ENCODE measurements at regions of chr3 and their contacts with region 1.

Region 1: DNA sequence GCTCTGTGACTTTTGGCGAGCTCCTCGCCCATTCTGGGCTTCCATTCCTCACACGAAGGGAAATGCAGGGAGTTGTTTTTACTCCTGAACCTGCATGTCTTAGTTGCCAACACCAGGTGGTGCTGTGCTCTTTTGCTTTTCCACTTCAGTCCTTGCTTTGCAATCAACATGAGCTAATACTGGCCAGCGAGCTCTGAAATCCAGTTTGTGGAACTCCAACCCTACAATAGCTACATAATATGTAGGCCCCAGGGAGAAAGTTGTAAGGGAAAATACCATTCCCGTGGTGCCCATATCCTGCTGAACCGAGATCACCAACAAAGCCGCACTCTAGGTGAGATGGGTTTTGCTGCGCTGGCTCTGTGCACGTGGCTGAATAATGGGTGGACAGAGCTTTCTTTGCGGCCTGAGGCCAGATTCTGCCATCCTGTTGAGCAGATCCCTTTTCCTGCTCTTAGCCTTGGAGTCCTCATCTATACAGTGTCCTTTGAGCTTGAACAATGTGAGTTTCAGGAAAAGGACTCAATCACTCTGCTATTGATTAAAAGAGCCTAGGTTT is 25.0 kb downstream of the LSM3 start:
- DNase-seq: peak; percentile 50
- ATAC-seq: peak; percentile 77
- H3K4me3 Mint-ChIP-seq: no peak overlapping the region
- H3K27ac Mint-ChIP-seq: no peak overlapping the region
- H3K4me1 Mint-ChIP-seq: no peaks in the 10 kb centered on the region
- H3K27me3 Mint-ChIP-seq: no peaks in the 10 kb centered on the region

Region 2: GRCh38 chr3:14178247-14179113 is 25.1 kb before region 1 on chr3 and contains the starts of genes LSM3 and XPC:
- CTCF ChIA-PET with region 1: interaction called, 11 read pairs
- DNase-seq: peak; percentile 97
- ATAC-seq: peak; percentile 92
- H3K4me3 Mint-ChIP-seq: peak within 1 kb of the TSS; percentile 81
- H3K27ac Mint-ChIP-seq: peak within 1 kb of the TSS; percentile 99
- H3K4me1 Mint-ChIP-seq: peaks cover 66% of the 10 kb centered on the region
- H3K27me3 Mint-ChIP-seq: no peaks in the 10 kb centered on the region
- total RNA-seq, gene LSM3: 16.5 to 18.9 TPM
- total RNA-seq, gene XPC: 36.0 to 39.5 TPM

Region 3: GRCh38 chr3:14188041-14188754 is 15.4 kb before region 1 on chr3:
- CTCF ChIA-PET with region 1: interaction called, 14 read pairs
- DNase-seq: no peak
- ATAC-seq: no peak
- H3K4me3 Mint-ChIP-seq: no peak overlapping the region
- H3K27ac Mint-ChIP-seq: no peak overlapping the region
- H3K4me1 Mint-ChIP-seq: peaks cover 29% of the 10 kb centered on the region
- H3K27me3 Mint-ChIP-seq: no peaks in the 10 kb centered on the region

Region 4: GRCh38 chr3:14214764-14215163 is 11.2 kb after region 1 on chr3:
- CTCF ChIA-PET with region 1: interaction called, 12 read pairs
- DNase-seq: no peak
- ATAC-seq: no peak
- H3K4me3 Mint-ChIP-seq: no peak overlapping the region
- H3K27ac Mint-ChIP-seq: no peak overlapping the region
- H3K4me1 Mint-ChIP-seq: no peaks in the 10 kb centered on the region
- H3K27me3 Mint-ChIP-seq: peaks cover under 1% of the 10 kb centered on the region

Region 5: GRCh38 chr3:14234251-14235002 is 30.8 kb after region 1 on chr3:
- CTCF ChIA-PET with region 1: interaction called, 11 read pairs
- DNase-seq: peak; percentile 31
- ATAC-seq: no peak
- H3K4me3 Mint-ChIP-seq: no peak overlapping the region
- H3K27ac Mint-ChIP-seq: no peak overlapping the region
- H3K4me1 Mint-ChIP-seq: peaks cover 7% of the 10 kb centered on the region
- H3K27me3 Mint-ChIP-seq: peaks cover 29% of the 10 kb centered on the region

Region 6: GRCh38 chr3:14413381-14414071 is 209.9 kb after region 1 on chr3:
- CTCF ChIA-PET with region 1: no interaction called
- DNase-seq: no peak
- ATAC-seq: no peak
- H3K4me3 Mint-ChIP-seq: no peak overlapping the region
- H3K27ac Mint-ChIP-seq: no peak overlapping the region
- H3K4me1 Mint-ChIP-seq: peaks cover 20% of the 10 kb centered on the region
- H3K27me3 Mint-ChIP-seq: no peaks in the 10 kb centered on the region

Region 7: DNA sequence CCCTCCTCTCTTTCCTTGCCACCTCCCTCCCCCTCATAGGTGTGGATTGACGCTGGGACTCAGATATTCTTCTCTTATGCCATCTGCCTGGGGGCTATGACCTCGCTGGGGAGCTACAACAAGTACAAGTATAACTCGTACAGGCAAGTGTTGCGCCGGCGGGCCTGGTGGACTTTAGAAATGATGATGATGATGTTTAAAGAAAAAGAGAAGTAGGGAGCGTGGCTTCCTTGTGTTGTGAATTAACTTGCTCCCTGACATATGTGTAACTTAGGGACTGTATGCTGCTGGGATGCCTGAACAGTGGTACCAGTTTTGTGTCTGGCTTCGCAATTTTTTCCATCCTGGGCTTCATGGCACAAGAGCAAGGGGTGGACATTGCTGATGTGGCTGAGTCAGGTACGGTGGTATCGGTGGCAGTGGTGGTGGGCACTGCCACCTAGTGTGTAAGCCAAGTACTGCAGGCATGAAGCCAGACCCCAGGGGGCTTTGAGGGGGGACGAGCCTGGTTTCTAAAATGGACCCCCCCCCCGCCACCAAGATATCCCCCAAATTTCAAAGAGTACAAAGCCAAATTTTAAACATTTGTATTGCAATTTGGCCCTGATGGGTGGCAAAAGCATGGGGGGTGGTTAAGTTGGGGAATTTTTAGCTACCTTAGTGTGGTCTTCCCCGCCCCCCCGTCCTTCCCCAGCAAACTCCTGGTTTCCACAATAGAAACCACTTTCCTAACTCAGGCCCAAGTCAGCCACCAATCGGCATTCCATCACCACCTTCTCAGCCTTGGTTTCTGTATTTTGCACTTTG is 264.4 kb after region 1 on chr3:
- CTCF ChIA-PET with region 1: interaction called, 26 read pairs
- DNase-seq: peak; percentile 44
- ATAC-seq: peak; percentile 58
- H3K4me3 Mint-ChIP-seq: no peak overlapping the region
- H3K27ac Mint-ChIP-seq: no peak overlapping the region
- H3K4me1 Mint-ChIP-seq: peaks cover 6% of the 10 kb centered on the region
- H3K27me3 Mint-ChIP-seq: no peaks in the 10 kb centered on the region

Region 8: DNA sequence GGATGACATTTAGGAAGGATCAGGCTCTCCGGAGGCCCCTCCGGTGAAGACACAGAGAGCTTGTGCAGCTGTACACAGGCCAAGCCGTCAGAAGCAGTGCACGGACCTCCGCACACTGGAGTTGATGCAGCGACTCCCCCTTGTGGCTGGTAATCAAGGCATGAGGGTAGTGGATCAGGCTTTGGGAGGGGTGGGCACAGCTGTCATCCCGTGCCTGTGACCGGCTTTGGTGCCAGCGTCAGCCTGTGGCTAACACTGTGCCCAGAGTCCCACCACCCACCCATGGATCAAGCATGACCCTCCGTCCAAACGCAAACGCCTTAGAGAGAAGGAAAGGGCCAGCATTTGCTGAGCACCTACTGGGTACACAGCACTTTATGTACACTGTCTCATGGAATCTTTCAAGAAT is 344.7 kb after region 1 on chr3:
- CTCF ChIA-PET with region 1: interaction called, 12 read pairs
- DNase-seq: peak; percentile 54
- ATAC-seq: peak; percentile 67
- H3K4me3 Mint-ChIP-seq: no peak overlapping the region
- H3K27ac Mint-ChIP-seq: no peak overlapping the region
- H3K4me1 Mint-ChIP-seq: no peaks in the 10 kb centered on the region
- H3K27me3 Mint-ChIP-seq: peaks cover 17% of the 10 kb centered on the region